Transverse colon (tissue), 4 donors: ENCODE measurements at regions of chr10 and their contacts with region 1.

Region 1: DNA sequence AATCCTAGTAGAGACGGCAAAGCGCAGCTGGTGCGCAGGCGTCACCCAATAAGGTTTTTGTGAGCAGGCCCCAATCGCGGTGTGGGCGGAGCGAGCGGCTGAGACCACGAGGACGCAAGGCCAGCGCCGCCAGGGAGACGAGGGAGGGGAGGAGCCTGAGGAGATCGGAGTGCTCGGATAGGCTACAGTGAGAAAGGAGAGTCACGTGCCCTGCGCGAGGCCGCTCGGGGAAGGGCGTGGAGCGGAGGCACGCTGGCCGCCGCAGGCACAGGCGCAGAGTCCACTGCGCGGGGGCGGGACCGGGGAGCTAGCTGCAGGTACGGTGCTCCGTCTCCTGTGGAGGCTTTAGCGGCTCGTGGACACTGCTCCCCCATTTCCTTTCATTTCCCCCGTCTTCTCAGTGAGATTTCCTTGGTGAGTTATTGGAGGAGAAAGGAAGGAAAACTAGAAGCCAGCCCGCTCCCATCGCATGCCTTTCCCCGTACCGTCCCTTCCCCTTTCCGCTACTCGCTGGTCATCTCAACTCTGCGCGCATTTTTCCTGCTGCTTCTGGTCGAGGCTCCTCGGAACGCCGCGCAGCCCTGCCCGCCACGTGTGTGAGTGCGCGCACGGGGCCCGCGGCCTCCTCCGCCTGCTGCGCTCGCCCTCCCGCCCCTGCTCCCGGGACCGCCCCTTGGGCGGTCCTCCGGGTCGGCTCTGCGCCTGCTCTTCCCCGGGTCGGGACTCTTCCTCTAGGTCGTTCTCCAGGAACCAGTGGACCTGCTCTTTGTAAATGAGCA is at the start of gene THNSL1:
- DNase-seq: peak; percentile 98
- H3K4me3 ChIP-seq: peak within 1 kb of the TSS; percentile 51 to 92 (median 62)
- H3K27ac ChIP-seq: peak within 1 kb of the TSS; percentile 94 to 98 (median 96)
- H3K4me1 ChIP-seq: peaks cover 0 to 18% (median 14%) of the 10 kb centered on the region in 4 donors
- H3K27me3 ChIP-seq: no peaks in the 10 kb centered on the region
- CTCF ChIP-seq: no peak
- EP300 ChIP-seq: no peak
- POLR2A ChIP-seq: peak; percentile 90
- total RNA-seq, gene THNSL1: 0.60 to 2.2 (median 2.0) TPM

Region 2: GRCh38 chr10:24724381-24725228 is 292.0 kb before region 1 on chr10:
- in situ Hi-C with region 1: loop called in 1 of 4 experiments (anchors 10 kb)
- intact Hi-C with region 1: no loop called
- DNase-seq: peak; percentile 98
- H3K4me3 ChIP-seq: peak overlapping the region; percentile 49 to 93 (median 80)
- H3K27ac ChIP-seq: peak overlapping the region; percentile 97 to 99 (median 98)
- H3K4me1 ChIP-seq: peaks cover 0 to 27% (median 13%) of the 10 kb centered on the region in 4 donors
- H3K27me3 ChIP-seq: no peaks in the 10 kb centered on the region
- CTCF ChIP-seq: no peak
- EP300 ChIP-seq: no peak
- POLR2A ChIP-seq: peak; percentile 97

Region 3: GRCh38 chr10:25157650-25158049 is 141.1 kb after region 1 on chr10:
- in situ Hi-C with region 1: no loop called
- intact Hi-C with region 1: loop called (anchors 2 kb)
- DNase-seq: no peak
- H3K4me3 ChIP-seq: no peak overlapping the region
- H3K27ac ChIP-seq: no peak overlapping the region
- H3K4me1 ChIP-seq: no peaks in the 10 kb centered on the region
- H3K27me3 ChIP-seq: no peaks in the 10 kb centered on the region
- CTCF ChIP-seq: no peak
- EP300 ChIP-seq: no peak
- POLR2A ChIP-seq: no peak